ENCODE measurements at regions of chr4 and their contacts with region 1.

Region 1: DNA sequence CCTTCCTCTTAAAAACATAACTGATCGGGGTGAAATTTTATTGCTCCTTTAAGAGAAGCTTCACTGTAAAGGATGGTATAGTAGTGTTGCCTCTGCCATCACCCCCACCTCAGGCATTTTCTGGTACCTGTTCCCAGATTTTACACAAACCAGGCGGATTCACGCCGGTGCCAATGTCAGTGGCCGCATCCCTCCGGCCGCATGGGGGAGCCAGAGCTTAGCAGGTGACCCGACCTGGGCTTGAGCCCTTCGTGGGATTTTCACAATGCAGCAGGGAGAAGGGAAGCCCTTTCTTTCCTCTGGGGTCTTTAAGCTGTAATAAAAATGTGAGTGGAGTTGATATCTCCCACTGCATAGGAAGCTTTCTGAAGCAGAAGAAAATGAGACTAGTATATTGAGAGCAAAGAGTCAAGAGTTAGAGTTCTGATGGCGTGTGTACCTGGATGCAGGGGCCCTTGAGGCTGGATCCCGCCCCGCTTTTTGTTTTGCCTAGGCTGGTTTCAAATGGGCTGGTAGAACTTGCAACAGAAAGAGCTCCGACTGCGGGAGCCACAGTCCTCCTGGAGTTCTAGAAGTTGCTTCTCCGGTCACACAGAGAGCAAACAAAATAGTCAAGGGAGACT is 59.4 kb downstream of the POLR2B start:
- DNase-seq: peak; percentile 34
- ATAC-seq: peak; percentile 96
- H3K4me3 ChIP-seq: peak overlapping the region in 1 of 3 experiments; percentile 41; a peak in 2 of 6 replicates
- H3K27ac ChIP-seq: no peak overlapping the region
- H3K4me1 ChIP-seq: no peaks in the 10 kb centered on the region
- H3K27me3 ChIP-seq: peaks cover 0 to 5% of the 10 kb centered on the region in 2 experiments; a peak in 2 of 5 replicates
- CTCF ChIP-seq: peak; percentile 92
- EP300 ChIP-seq: no peak
- POLR2A ChIP-seq: no peak
- RAD21 ChIP-seq: peak; percentile 82

Region 2: GRCh38 chr4:57100979-57101651 is 63.0 kb after region 1 on chr4:
- CTCF ChIA-PET with region 1: no interaction called
- POLR2A ChIA-PET with region 1: no interaction called
- in situ Hi-C with region 1: no loop called
- intact Hi-C with region 1: loop called (anchors 1 kb)
- DNase-seq: peak; percentile 88
- ATAC-seq: peak; percentile 93
- H3K4me3 ChIP-seq: no peak overlapping the region
- H3K27ac ChIP-seq: peak overlapping the region; percentile 25
- H3K4me1 ChIP-seq: peaks cover 38% of the 10 kb centered on the region
- H3K27me3 ChIP-seq: no peaks in the 10 kb centered on the region; a peak in 1 of 5 replicates
- CTCF ChIP-seq: no peak
- EP300 ChIP-seq: peak in 1 of 2 experiments; percentile 66; a peak in 2 of 4 replicates
- POLR2A ChIP-seq: no peak
- RAD21 ChIP-seq: no peak

Region 3: DNA sequence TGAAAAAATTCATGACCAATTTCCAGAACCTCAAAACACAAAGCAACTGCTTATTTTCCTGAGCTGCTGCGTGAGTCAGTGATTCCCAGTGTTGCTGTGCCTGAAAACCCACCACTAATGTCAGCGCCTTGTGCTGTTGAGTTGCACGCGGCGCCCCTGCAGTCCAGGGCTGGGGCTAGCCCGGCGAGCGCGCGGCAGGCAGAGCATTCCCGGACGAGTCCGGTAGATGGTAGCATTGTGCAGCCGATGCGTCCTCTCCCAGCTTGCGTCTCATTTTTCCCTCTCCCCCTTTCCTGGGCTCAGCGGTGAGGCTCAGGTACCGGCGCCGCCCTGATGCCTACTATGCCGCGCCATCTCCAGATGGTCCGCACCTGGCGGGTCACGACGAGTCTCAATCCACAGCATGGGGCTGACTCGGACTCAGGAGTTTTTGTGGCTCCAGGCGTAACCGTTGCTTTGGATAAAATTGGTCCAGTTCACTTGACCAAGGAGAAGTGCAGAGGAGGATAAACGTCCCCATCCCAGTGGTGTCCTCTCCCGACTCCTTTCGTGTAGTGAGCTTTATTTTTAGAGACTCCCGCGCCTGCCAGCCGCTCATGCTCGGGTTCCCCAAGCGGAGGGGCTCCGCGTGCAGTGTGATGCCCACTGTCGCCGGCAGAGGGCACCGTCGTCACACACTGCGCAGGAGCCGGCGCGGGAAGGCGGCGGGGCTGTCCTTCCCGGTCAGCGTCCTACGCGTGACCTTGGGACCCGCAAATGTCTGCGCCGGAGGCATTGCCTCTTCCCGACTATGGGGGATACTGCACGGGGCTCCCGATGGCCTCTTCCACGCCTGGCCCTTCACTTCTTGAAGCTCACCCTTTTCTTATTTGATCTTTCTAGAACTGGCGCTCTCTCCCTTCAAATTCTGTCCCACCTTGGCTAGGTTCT is 125.7 kb after region 1 on chr4:
- CTCF ChIA-PET with region 1: interaction called, 11 read pairs
- POLR2A ChIA-PET with region 1: no interaction called
- in situ Hi-C with region 1: loop called (anchors 5 kb)
- intact Hi-C with region 1: loop called (anchors 1 kb)
- DNase-seq: peak; percentile 68
- ATAC-seq: peak; percentile 99
- H3K4me3 ChIP-seq: peak overlapping the region; percentile 48 to 74 (median 59); a peak in 5 of 6 replicates
- H3K27ac ChIP-seq: no peak overlapping the region
- H3K4me1 ChIP-seq: peaks cover 13% of the 10 kb centered on the region; the same call in 1 of the 2 replicates
- H3K27me3 ChIP-seq: peaks cover 2 to 5% of the 10 kb centered on the region in 2 experiments; a peak in 4 of 5 replicates
- CTCF ChIP-seq: peak; percentile 88
- EP300 ChIP-seq: no peak
- POLR2A ChIP-seq: no peak
- RAD21 ChIP-seq: peak; percentile 79

Region 4: DNA sequence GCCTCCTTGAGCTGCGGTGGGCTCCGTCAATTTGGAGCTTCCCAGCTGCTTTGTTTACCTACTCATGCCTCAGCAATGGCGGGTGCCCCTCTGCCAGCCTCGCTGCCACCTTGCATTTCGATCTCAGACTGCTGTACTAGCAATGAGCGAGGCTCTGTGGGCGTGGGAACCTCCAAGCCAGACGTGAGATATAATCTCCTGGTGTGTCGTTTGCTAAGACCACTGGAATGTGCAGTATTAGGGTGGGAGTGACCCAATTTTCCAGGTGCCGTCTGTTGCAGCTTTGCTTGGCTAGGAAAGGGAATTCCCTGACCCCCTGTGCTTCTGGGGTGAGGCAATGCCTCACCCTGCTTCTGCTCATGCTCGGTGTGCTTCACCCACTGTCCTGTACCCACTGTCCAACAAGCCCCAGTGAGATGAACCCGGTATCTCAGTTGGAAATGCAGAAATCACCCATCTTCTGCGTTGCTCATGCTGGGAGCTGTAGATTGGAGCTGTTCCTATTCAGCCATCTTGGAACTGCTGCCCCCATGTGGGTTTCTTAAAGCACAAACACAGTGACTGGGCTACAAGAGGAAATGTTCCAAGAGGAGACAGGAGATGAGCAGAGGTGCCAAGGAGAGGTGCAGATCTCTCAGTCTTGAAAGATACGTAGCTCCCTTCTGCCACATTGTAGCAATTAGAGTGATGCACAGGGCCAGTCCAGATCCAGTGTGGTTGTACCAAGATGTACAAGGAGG is 265.1 kb after region 1 on chr4:
- CTCF ChIA-PET with region 1: no interaction called
- POLR2A ChIA-PET with region 1: no interaction called
- in situ Hi-C with region 1: no loop called
- intact Hi-C with region 1: loop called (anchors 5 kb)
- DNase-seq: no peak
- ATAC-seq: peak; percentile 54; the same call in 1 of the 3 replicates
- H3K4me3 ChIP-seq: no peak overlapping the region
- H3K27ac ChIP-seq: no peak overlapping the region
- H3K4me1 ChIP-seq: no peaks in the 10 kb centered on the region
- H3K27me3 ChIP-seq: no peaks in the 10 kb centered on the region
- CTCF ChIP-seq: no peak
- EP300 ChIP-seq: no peak
- POLR2A ChIP-seq: no peak
- RAD21 ChIP-seq: no peak